ENCODE measurements at regions of chr12 and their contacts with region 1.

Region 1: GRCh38 chr12:22443379-22444316 is 100.7 kb downstream of the C2CD5 start:
- DNase-seq: peak; percentile 82
- ATAC-seq: peak; percentile 100
- H3K4me3 ChIP-seq: no peak overlapping the region
- H3K27ac ChIP-seq: no peak overlapping the region
- H3K4me1 ChIP-seq: no peaks in the 10 kb centered on the region
- H3K27me3 ChIP-seq: no peaks in the 10 kb centered on the region; a peak in 1 of 5 replicates
- CTCF ChIP-seq: peak; percentile 92
- EP300 ChIP-seq: no peak
- POLR2A ChIP-seq: no peak
- RAD21 ChIP-seq: peak; percentile 72

Region 2: DNA sequence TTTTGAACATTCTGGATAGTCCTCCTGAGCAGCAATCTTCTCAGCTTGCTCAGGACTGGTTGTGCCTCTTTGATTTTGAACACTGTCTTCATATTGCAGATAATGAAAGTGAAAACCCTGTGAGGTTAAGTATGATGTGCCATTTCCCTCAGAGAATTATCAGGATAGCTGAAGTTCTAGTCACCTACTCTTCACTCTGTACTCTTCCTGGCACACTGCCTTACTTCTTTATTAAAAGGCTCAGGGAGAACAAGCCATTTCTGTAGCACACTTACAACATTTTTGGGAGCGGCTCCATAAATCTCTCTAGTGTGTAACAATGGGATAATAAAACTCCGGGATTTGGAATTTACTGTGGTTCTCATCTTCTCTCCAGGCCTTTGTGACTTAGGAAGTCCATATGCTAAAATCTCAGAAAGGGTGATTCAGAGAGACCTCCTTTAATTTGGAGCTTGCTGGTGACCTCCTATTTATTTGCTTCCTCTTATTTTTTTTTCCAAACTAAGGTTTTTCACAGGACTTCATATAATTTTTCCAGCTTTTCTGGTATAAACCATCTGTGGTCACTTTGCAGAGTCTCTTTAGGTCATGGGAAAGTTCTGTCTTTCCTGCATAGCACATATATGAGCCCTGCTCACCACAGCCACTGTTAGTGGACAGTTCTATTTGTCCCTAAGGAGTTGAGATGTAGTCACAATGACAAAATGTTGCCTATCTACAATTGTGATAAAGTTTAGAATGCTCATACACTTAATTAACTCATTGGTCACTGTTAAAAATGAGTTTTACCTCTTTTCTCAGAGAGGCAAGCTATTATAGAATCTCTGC is 732.5 kb before region 1 on chr12:
- CTCF ChIA-PET with region 1: no interaction called
- POLR2A ChIA-PET with region 1: no interaction called
- in situ Hi-C with region 1: loop called (anchors 25 kb)
- intact Hi-C with region 1: no loop called
- DNase-seq: no peak
- ATAC-seq: no peak
- H3K4me3 ChIP-seq: no peak overlapping the region
- H3K27ac ChIP-seq: no peak overlapping the region
- H3K4me1 ChIP-seq: no peaks in the 10 kb centered on the region
- H3K27me3 ChIP-seq: no peaks in the 10 kb centered on the region
- CTCF ChIP-seq: no peak
- EP300 ChIP-seq: no peak
- POLR2A ChIP-seq: no peak
- RAD21 ChIP-seq: no peak

Region 3: GRCh38 chr12:22083167-22083566 is 360.5 kb before region 1 on chr12:
- CTCF ChIA-PET with region 1: interaction called, 10 read pairs
- POLR2A ChIA-PET with region 1: no interaction called
- in situ Hi-C with region 1: no loop called
- intact Hi-C with region 1: loop called (anchors 5 kb)
- DNase-seq: peak; percentile 16
- ATAC-seq: no peak
- H3K4me3 ChIP-seq: no peak overlapping the region
- H3K27ac ChIP-seq: no peak overlapping the region
- H3K4me1 ChIP-seq: peaks cover 16% of the 10 kb centered on the region
- H3K27me3 ChIP-seq: no peaks in the 10 kb centered on the region
- CTCF ChIP-seq: peak; percentile 42
- EP300 ChIP-seq: no peak
- POLR2A ChIP-seq: no peak
- RAD21 ChIP-seq: no peak

Region 4: GRCh38 chr12:22100958-22101748 is 342.5 kb before region 1 on chr12:
- CTCF ChIA-PET with region 1: interaction called, 15 read pairs
- POLR2A ChIA-PET with region 1: no interaction called
- in situ Hi-C with region 1: no loop called
- intact Hi-C with region 1: loop called (anchors 1 kb)
- DNase-seq: peak; percentile 40
- ATAC-seq: peak; percentile 89
- H3K4me3 ChIP-seq: no peak overlapping the region
- H3K27ac ChIP-seq: no peak overlapping the region
- H3K4me1 ChIP-seq: no peaks in the 10 kb centered on the region
- H3K27me3 ChIP-seq: no peaks in the 10 kb centered on the region
- CTCF ChIP-seq: peak; percentile 69
- EP300 ChIP-seq: no peak
- POLR2A ChIP-seq: no peak
- RAD21 ChIP-seq: peak; percentile 55; the same call in 1 of the 2 replicates

Region 5: GRCh38 chr12:22416801-22417200 is 26.8 kb before region 1 on chr12:
- CTCF ChIA-PET with region 1: no interaction called
- POLR2A ChIA-PET with region 1: no interaction called
- in situ Hi-C with region 1: no loop called
- intact Hi-C with region 1: no loop called
- DNase-seq: no peak
- ATAC-seq: no peak
- H3K4me3 ChIP-seq: no peak overlapping the region
- H3K27ac ChIP-seq: no peak overlapping the region
- H3K4me1 ChIP-seq: no peaks in the 10 kb centered on the region
- H3K27me3 ChIP-seq: no peaks in the 10 kb centered on the region
- CTCF ChIP-seq: no peak
- EP300 ChIP-seq: no peak
- POLR2A ChIP-seq: no peak
- RAD21 ChIP-seq: no peak